Activated T-helper 1 cell treated with anti-CD3 and anti-CD28 coated beads, Interleukin-12 subunit alpha, Interleukin-12 subunit beta, Interleukin-2, Interleukin-4 antibody, amounts not matched to agents 30 ng/mL and 10 ng/mL and 1 ng/mL, durations not matched to agents 14 hours and 24 hours and 36 hours (primary cell): ENCODE measurements at regions of chrX and their contacts with region 1.

Region 1: DNA sequence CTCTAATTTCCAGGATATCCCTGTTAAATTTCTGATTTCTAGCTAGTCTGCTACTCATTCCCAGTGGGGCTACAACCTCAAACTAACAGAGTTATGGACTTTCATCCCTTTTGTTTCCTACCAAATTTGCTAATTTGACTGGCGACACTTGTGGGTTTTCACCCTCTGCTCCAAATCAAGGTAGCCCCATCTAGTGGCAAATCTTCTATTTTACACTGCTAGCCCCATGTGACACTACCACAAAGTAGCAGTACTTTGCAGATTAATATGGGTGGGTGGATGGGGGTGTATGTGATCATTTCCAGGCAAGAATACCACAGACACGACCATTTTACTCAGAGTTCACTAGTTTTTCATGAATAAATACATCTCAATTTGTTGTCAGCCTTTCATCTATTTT is 150.3 kb downstream of the MSL3 start:
- DNase-seq: no peak
- H3K4me3 Mint-ChIP-seq: no peak overlapping the region
- H3K27ac Mint-ChIP-seq: no peak overlapping the region
- H3K4me1 Mint-ChIP-seq: peaks cover 4% of the 10 kb centered on the region
- H3K27me3 Mint-ChIP-seq: no peaks in the 10 kb centered on the region

Region 2: GRCh38 chrX:11533211-11533651 is 375.1 kb before region 1 on chrX:
- intact Hi-C with region 1: loop called (anchors 1 kb)
- DNase-seq: no peak
- H3K4me3 Mint-ChIP-seq: no peak overlapping the region
- H3K27ac Mint-ChIP-seq: no peak overlapping the region
- H3K4me1 Mint-ChIP-seq: no peaks in the 10 kb centered on the region
- H3K27me3 Mint-ChIP-seq: peaks cover 8% of the 10 kb centered on the region

Region 3: DNA sequence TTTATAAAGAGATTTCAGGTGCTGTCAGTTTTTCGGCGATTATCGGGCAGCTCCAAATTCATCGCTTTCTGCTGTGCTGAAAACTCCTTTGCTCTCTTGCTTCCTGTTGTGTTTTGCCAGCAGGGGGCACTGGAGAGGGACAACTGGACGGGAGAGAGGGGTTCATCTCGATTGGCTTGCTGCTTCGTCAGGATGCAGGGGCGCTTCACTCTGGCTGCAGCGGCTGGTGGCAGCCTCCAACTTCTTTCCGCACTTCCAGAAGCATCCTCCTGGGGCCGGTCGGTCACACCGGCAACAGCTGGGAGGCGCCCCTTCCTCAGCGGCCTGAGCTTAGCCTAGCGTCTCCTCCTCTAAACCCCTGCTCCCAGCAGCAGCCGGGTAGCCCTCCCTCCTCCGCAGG is 120.8 kb before region 1 on chrX:
- intact Hi-C with region 1: loop called (anchors 1 kb)
- DNase-seq: peak; percentile 50
- H3K4me3 Mint-ChIP-seq: peak overlapping the region; percentile 73
- H3K27ac Mint-ChIP-seq: no peak overlapping the region
- H3K4me1 Mint-ChIP-seq: peaks cover 18% of the 10 kb centered on the region
- H3K27me3 Mint-ChIP-seq: no peaks in the 10 kb centered on the region

Region 4: DNA sequence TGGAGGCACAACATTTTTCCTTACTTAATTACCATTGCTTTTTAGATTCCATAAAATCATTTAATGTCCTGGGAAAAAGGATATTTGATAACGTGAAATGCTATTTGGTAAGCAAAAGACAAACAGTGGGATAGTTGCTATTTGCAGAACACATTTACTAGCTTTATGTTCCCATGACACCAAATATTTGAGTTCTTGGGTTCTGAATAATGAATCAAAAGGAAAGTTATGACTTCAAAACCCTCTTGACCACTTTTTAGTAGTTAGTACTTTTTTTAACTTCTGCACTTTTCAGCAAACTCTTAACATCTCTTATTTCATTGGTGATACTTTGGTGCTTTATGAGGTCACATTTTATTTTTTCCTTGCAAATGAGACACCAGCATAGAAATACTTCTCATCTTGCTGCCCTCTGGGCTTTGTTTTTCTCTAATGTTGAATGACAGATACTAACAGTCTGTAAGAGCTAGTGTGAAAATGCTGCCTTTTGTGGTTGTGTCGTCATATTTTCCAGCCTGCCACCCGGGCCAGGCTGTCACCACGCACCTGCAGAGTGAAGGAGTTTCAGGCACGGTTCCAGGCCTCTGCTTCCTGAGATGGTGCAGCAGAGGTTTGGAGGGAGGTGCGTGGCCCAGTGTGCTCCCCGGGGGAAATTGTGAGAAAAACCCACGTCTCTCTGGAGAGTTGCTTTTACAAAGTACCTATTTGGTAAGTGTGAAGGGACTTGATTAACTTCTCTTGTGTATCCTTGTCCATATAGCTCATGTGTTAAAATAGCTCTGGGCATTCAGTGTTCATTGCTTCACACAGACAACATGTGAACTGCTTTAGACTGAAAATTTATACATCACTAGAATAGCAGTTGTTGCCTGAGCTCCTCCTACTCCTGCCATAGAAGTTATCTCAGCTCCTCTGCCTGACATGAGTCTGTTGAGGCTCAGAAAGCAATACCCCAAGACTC is 115.6 kb before region 1 on chrX:
- intact Hi-C with region 1: loop called (anchors 1 kb)
- DNase-seq: peak; percentile 40
- H3K4me3 Mint-ChIP-seq: peak overlapping the region; percentile 12
- H3K27ac Mint-ChIP-seq: peak overlapping the region; percentile 97
- H3K4me1 Mint-ChIP-seq: peaks cover 19% of the 10 kb centered on the region
- H3K27me3 Mint-ChIP-seq: no peaks in the 10 kb centered on the region